ENCODE measurements at regions of chrX and their contacts with region 1.

Region 1: DNA sequence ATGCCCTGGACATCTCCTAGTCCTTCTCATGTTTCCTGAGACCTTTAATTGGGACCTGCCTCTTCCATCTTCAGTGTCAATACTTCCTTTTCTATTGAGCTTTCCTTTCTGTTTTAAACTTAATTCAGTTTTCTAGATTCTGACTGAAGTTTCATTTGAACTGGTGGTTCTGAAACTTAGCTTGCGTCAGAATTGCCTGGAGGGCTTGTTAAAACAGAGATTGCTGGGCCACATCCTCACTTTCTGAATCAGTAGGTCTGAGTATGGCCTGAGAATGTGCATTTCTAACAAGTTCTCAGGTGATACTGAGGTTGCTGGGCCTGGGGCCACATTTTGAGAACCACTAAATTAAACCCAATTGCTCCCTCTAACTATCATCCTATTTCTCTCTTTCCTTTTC is 152.1 kb upstream of the DGKK start:
- DNase-seq: no peak

Region 2: GRCh38 chrX:50565718-50566117 is 57.0 kb before region 1 on chrX:
- intact Hi-C with region 1: loop called in 1 of 2 experiments (anchors 2 kb)
- DNase-seq: no peak

Region 3: GRCh38 chrX:50581405-50581804 is 41.3 kb before region 1 on chrX:
- intact Hi-C with region 1: no loop called
- DNase-seq: no peak

Region 4: DNA sequence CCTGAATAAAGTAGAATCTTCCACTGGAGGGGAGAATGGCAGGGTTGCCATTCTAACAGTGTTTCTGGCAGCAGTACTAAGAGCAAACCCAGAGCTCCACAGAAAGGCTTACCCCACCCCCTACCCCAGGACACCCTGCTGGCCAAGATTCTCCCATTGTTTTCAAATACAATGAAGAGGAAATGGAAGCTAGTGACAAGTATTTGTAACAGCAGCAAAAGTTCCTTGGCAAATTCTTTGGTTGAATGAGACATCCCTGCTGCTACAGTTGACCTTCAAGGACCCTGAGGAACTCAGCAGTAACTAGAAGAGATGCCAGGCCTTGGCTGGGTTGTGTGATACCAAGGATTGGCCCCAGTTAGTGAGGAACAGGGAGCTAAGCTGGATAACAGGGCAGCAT is 28.0 kb before region 1 on chrX:
- intact Hi-C with region 1: no loop called
- DNase-seq: no peak

Region 5: DNA sequence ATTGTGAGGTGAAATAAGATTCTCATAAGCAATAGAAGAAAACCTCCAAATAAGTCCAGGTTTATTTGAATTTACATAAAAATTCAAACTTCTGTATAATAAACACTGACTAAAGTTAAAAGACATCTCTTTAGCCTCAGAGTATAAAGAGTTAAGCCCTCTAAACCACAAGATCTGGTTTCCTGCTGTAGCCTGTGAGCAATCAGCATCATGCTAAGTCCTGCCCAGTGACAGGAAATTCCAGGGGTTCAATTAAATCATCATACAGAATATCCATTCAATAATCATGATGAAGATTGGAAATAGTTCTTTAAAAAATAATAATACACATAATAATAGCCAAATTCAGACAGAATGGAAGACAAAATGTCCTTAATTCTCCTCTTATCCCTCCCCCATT is 13.0 kb before region 1 on chrX:
- intact Hi-C with region 1: no loop called
- DNase-seq: no peak